Naive thymus-derived CD4-positive, alpha-beta T cell (primary cell): ENCODE measurements at regions of chr4 and their contacts with region 1.

Region 1: GRCh38 chr4:185425647-185426352 is at the start of gene UFSP2:
- DNase-seq: peak; percentile 88 to 96 (median 92)
- ATAC-seq: peak; percentile 93
- H3K4me3 ChIP-seq: peak within 1 kb of the TSS; percentile 98
- H3K4me3 Mint-ChIP-seq: peak within 1 kb of the TSS; percentile 78 to 97 (median 90)
- H3K27ac ChIP-seq: peak within 1 kb of the TSS; percentile 95
- H3K27ac Mint-ChIP-seq: peak within 1 kb of the TSS; percentile 89 to 100 (median 99)
- H3K4me1 ChIP-seq: peaks cover 16 to 18% of the 10 kb centered on the region in 2 donors
- H3K4me1 Mint-ChIP-seq: peaks cover 25 to 43% (median 38%) of the 10 kb centered on the region in 7 donors
- H3K27me3 ChIP-seq: no peaks in the 10 kb centered on the region
- H3K27me3 Mint-ChIP-seq: peaks cover 0 to 12% (median 7%) of the 10 kb centered on the region in 5 donors
- total RNA-seq, gene UFSP2: 13.9 to 34.5 (median 21.0) TPM

Region 2: GRCh38 chr4:183659029-183659871 is 1766.5 kb before region 1 on chr4 and contains the starts of genes RWDD4 and TRAPPC11:
- CTCF ChIA-PET with region 1: no interaction called
- POLR2A ChIA-PET with region 1: no interaction called
- intact Hi-C with region 1: loop called (anchors 1 to 5 kb)
- DNase-seq: peak; percentile 83 to 97 (median 95)
- ATAC-seq: peak; percentile 99
- H3K4me3 ChIP-seq: peak within 1 kb of the TSS; percentile 87
- H3K4me3 Mint-ChIP-seq: peak within 1 kb of the TSS; percentile 91 to 98 (median 96)
- H3K27ac ChIP-seq: peak within 1 kb of the TSS; percentile 96
- H3K27ac Mint-ChIP-seq: peak within 1 kb of the TSS; percentile 90 to 99 (median 95)
- H3K4me1 ChIP-seq: peaks cover 14 to 19% of the 10 kb centered on the region in 2 donors
- H3K4me1 Mint-ChIP-seq: peaks cover 35 to 48% (median 38%) of the 10 kb centered on the region in 7 donors
- H3K27me3 ChIP-seq: no peaks in the 10 kb centered on the region
- H3K27me3 Mint-ChIP-seq: no peaks in the 10 kb centered on the region
- total RNA-seq, gene RWDD4: 9.3 to 15.8 (median 11.6) TPM
- total RNA-seq, gene TRAPPC11: 26.3 to 48.8 (median 35.6) TPM

Region 3: GRCh38 chr4:183840311-183840710 is 1585.5 kb before region 1 on chr4:
- CTCF ChIA-PET with region 1: no interaction called
- POLR2A ChIA-PET with region 1: no interaction called
- intact Hi-C with region 1: no loop called
- DNase-seq: peak; percentile 27 to 62 (median 57)
- ATAC-seq: peak; percentile 70
- H3K4me3 ChIP-seq: no peak overlapping the region
- H3K4me3 Mint-ChIP-seq: no peak overlapping the region
- H3K27ac ChIP-seq: no peak overlapping the region
- H3K27ac Mint-ChIP-seq: no peak overlapping the region
- H3K4me1 ChIP-seq: no peaks in the 10 kb centered on the region
- H3K4me1 Mint-ChIP-seq: no peaks in the 10 kb centered on the region
- H3K27me3 ChIP-seq: no peaks in the 10 kb centered on the region
- H3K27me3 Mint-ChIP-seq: peaks cover 6 to 26% (median 20%) of the 10 kb centered on the region in 5 donors

Region 4: GRCh38 chr4:185256446-185256845 is 169.4 kb before region 1 on chr4:
- CTCF ChIA-PET with region 1: no interaction called
- POLR2A ChIA-PET with region 1: interaction called, 11 read pairs
- intact Hi-C with region 1: no loop called
- DNase-seq: no peak
- ATAC-seq: no peak
- H3K4me3 ChIP-seq: peak overlapping the region; percentile 39
- H3K4me3 Mint-ChIP-seq: peak overlapping the region in 6 of 10 donors; percentile 36 to 83 (median 78)
- H3K27ac ChIP-seq: peak overlapping the region; percentile 2
- H3K27ac Mint-ChIP-seq: peak overlapping the region in 5 of 9 donors; percentile 83 to 92 (median 87)
- H3K4me1 ChIP-seq: peaks cover 22 to 23% of the 10 kb centered on the region in 2 donors
- H3K4me1 Mint-ChIP-seq: peaks cover 10 to 70% (median 43%) of the 10 kb centered on the region in 7 donors
- H3K27me3 ChIP-seq: no peaks in the 10 kb centered on the region
- H3K27me3 Mint-ChIP-seq: no peaks in the 10 kb centered on the region

Region 5: DNA sequence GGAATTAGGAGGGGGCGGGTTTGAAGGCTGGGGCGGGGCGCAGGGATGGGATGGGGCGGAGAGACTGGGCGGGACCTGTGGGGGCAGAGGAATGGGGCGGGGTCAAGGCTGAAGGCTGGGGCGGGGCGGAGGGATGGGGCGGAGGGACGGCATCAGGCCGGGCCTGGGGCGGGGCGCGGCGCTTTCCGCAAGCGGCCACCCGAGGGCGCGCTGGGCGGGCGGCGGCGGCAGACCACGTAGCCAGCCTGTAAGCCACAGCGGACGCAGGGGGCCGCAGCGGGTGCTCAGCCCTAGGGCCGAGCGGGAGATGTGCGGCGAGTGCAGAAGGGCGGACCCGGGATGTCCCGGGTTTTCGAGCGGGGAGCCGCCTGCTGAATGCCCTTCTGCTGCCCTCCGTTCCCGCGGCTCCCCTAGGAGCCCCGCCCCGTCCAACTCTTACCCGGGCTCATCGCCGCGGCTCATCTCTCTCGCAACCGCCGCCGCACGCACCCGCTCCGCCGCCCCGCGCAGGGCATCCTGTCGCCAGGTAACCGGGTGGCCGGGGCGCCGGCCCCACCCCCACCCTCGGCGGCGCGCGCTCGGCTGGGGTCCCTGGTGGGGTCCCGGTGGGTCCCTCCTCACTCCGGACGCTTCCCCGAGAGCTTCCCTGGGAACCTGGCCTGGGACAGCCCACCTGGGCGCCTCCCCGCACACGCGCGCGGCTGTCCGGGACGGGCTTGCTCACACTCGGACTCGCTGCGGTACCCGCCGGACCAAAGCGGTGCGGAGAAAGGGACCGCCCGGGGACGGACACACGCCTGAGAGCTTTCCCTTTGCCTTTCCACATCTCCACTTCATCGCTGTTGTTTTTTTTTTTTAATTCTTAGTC is 45.7 kb after region 1 on chr4 and contains the start of gene CCDC110:
- CTCF ChIA-PET with region 1: no interaction called
- POLR2A ChIA-PET with region 1: interaction called, 3 read pairs
- intact Hi-C with region 1: loop called (anchors 1 kb)
- DNase-seq: peak; percentile 72 to 89 (median 86)
- ATAC-seq: peak; percentile 99
- H3K4me3 ChIP-seq: peak within 1 kb of the TSS; percentile 61
- H3K4me3 Mint-ChIP-seq: peak within 1 kb of the TSS; percentile 87 to 98 (median 92)
- H3K27ac ChIP-seq: peak within 1 kb of the TSS; percentile 65
- H3K27ac Mint-ChIP-seq: peak within 1 kb of the TSS; percentile 5 to 90 (median 86)
- H3K4me1 ChIP-seq: peaks cover 0 to 3% of the 10 kb centered on the region in 2 donors
- H3K4me1 Mint-ChIP-seq: peaks cover 5 to 18% (median 9%) of the 10 kb centered on the region in 7 donors
- H3K27me3 ChIP-seq: no peaks in the 10 kb centered on the region
- H3K27me3 Mint-ChIP-seq: peaks cover 0 to 52% (median 6%) of the 10 kb centered on the region in 5 donors
- total RNA-seq, gene CCDC110: 0.42 to 1.8 (median 0.76) TPM in 4 of 5 experiments, not detected in the other

Region 6: DNA sequence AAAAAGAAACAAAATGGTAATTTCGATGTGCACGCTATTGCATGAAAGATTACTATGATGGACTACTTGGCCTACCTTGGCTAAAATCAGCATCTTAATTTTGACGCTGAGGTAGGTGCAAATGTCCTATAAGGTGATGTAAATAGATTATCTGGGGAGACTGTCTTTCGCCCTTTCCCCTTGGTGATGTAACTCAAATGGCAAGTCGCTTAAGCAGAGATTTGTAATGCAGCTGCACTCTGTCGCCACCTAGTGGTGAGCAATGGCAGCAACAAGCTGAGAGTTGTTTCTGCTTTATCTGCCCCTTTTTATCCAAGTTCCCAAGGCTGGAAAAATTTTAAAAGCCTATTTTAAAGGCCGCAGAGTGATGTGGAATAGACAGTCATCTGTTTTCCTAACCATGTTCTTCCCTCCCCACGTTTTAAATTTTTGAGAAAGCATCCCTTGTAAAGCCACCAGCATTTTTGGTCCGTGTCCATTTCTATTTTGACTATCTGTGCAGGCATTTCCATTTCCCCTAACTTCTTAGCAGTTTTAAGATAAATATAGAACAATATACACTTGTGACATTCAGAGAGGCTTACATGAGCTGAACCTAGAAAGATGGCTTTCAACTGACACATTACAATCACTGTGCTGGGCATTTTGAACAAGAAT is 171.9 kb after region 1 on chr4:
- CTCF ChIA-PET with region 1: interaction called, 3 read pairs
- POLR2A ChIA-PET with region 1: no interaction called
- intact Hi-C with region 1: loop called in 1 of 2 experiments (anchors 1 kb)
- DNase-seq: peak; percentile 42 to 60 (median 56)
- ATAC-seq: peak; percentile 87
- H3K4me3 ChIP-seq: no peak overlapping the region
- H3K4me3 Mint-ChIP-seq: no peak overlapping the region
- H3K27ac ChIP-seq: no peak overlapping the region
- H3K27ac Mint-ChIP-seq: no peak overlapping the region
- H3K4me1 ChIP-seq: no peaks in the 10 kb centered on the region
- H3K4me1 Mint-ChIP-seq: peaks cover 0 to 4% (median 0%) of the 10 kb centered on the region in 7 donors
- H3K27me3 ChIP-seq: peaks cover 4 to 5% of the 10 kb centered on the region in 2 donors
- H3K27me3 Mint-ChIP-seq: peaks cover 18 to 33% (median 25%) of the 10 kb centered on the region in 5 donors

Region 7: GRCh38 chr4:186201535-186202230 is 775.9 kb after region 1 on chr4:
- CTCF ChIA-PET with region 1: no interaction called
- POLR2A ChIA-PET with region 1: no interaction called
- intact Hi-C with region 1: loop called (anchors 5 to 10 kb)
- DNase-seq: peak in 8 of 9 donors; percentile 12 to 70 (median 50)
- ATAC-seq: peak; percentile 98
- H3K4me3 ChIP-seq: no peak overlapping the region
- H3K4me3 Mint-ChIP-seq: peak overlapping the region in 7 of 10 donors; percentile 0 to 55 (median 35)
- H3K27ac ChIP-seq: peak overlapping the region; percentile 48
- H3K27ac Mint-ChIP-seq: peak overlapping the region in 8 of 9 donors; percentile 14 to 97 (median 56)
- H3K4me1 ChIP-seq: no peaks in the 10 kb centered on the region
- H3K4me1 Mint-ChIP-seq: peaks cover 8 to 51% (median 20%) of the 10 kb centered on the region in 7 donors
- H3K27me3 ChIP-seq: no peaks in the 10 kb centered on the region
- H3K27me3 Mint-ChIP-seq: no peaks in the 10 kb centered on the region